Tibial artery (tissue), 4 donors: ENCODE measurements at regions of chr19 and their contacts with region 1.

Region 1: DNA sequence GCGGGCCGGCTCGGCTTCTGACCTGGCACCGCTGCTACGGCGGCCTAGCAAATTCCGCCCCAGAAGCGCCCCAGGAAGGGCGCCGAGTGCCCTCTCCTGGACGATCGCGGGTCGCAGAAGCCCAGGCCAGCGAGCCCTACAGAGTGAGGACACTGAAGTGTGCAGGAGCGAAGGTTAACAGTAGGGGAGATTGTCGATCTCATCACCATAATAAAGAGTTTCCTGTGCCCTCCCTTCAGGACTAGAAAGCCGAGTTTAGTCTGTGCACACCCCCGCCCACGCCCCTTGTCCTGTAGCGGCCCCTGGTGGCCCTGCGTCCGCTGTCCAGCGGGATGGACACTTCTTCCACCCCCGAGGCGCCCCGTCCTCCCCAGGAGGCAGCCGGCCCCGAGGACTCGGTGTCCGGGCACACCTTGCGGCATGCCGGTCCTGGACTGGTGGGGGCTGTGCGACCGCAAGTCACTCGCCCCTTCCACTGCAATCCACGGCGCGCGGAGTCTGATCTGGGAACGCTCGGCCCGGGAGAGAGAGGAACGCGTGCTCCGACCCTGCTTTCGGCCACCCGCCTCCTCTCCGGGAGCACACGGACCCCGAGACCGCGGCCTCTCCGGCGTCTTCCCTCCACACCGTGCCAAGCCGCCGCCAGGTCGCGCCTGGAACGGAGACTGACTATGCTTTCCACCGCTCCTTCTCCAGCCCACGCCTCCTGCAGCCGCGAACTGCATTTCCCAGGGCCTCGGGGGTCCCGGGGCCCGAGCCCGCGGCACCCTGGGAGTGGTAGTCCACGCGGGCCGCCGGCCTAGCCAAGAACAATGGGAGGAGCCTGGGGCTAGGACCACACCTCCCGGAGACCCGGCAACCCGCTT is 769 bp upstream of the KMT2B start:
- DNase-seq: peak; percentile 96 to 98
- H3K4me3 ChIP-seq: peak overlapping the region; percentile 64 to 95
- H3K27ac ChIP-seq: peak overlapping the region; percentile 86
- H3K4me1 ChIP-seq: peaks cover 0 to 36% (median 26%) of the 10 kb centered on the region in 4 donors
- H3K27me3 ChIP-seq: no peaks in the 10 kb centered on the region
- CTCF ChIP-seq: peak; percentile 87 to 93

Region 2: GRCh38 chr19:35124098-35125060 is 592.7 kb before region 1 on chr19:
- intact Hi-C with region 1: loop called (anchors 10 kb)
- DNase-seq: peak; percentile 96 to 97
- H3K4me3 ChIP-seq: peak overlapping the region; percentile 58 to 61
- H3K27ac ChIP-seq: peak overlapping the region; percentile 90 to 95
- H3K4me1 ChIP-seq: peaks cover 14 to 67% (median 33%) of the 10 kb centered on the region in 4 donors
- H3K27me3 ChIP-seq: no peaks in the 10 kb centered on the region
- CTCF ChIP-seq: peak in 1 of 2 experiments; percentile 5

Region 3: GRCh38 chr19:35545001-35545911 is 171.8 kb before region 1 on chr19 and contains the start of gene TMEM147:
- intact Hi-C with region 1: loop called (anchors 5 kb)
- DNase-seq: peak; percentile 92 to 96
- H3K4me3 ChIP-seq: peak within 1 kb of the TSS; percentile 79
- H3K27ac ChIP-seq: peak within 1 kb of the TSS; percentile 87 to 89
- H3K4me1 ChIP-seq: peaks cover 7 to 32% (median 20%) of the 10 kb centered on the region in 4 donors
- H3K27me3 ChIP-seq: no peaks in the 10 kb centered on the region
- CTCF ChIP-seq: no peak

Region 4: DNA sequence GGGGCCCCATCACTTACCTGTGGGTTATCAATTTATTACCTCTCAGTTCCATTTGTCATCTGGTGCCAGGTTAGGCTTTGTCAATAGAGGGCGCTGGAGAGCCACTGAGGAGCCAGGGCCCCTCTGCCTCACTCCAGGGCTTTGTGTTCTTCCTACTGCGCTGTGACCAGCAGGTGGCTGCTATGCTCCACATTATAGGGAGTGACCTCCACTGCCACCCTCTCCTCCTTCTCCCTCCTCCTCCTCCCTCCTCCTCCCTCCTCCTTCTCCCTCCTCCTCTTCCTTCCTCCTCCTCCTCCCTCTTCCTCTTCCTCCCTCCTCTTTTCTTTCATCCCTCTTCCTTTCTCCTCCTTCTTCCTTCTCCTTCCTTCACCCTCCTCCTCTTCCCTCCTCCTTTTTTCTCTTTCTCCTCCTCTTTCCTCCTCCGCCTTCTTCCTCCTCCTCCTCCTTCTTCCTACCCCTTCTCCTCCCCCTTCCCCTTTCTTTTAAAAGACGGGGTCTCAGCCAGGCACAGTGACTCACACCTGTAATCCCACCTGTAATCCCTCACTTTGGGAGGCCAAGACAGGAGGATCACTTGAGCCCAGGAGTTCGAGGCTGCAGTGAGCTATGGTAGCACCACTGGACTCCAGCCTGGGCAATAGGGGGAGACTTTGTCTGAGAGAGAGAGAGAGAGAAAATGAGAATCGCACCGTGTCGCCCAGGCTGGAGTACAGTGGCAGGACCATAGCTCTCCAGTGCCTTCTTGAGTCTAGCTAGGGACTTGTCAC is 23.0 kb before region 1 on chr19:
- intact Hi-C with region 1: loop called (anchors 2 kb)
- DNase-seq: peak; percentile 86 to 91
- H3K4me3 ChIP-seq: no peak overlapping the region
- H3K27ac ChIP-seq: no peak overlapping the region
- H3K4me1 ChIP-seq: peaks cover 0 to 5% (median 0%) of the 10 kb centered on the region in 4 donors
- H3K27me3 ChIP-seq: peaks cover 0 to 5% of the 10 kb centered on the region in 2 donors
- CTCF ChIP-seq: peak; percentile 95

Region 5: DNA sequence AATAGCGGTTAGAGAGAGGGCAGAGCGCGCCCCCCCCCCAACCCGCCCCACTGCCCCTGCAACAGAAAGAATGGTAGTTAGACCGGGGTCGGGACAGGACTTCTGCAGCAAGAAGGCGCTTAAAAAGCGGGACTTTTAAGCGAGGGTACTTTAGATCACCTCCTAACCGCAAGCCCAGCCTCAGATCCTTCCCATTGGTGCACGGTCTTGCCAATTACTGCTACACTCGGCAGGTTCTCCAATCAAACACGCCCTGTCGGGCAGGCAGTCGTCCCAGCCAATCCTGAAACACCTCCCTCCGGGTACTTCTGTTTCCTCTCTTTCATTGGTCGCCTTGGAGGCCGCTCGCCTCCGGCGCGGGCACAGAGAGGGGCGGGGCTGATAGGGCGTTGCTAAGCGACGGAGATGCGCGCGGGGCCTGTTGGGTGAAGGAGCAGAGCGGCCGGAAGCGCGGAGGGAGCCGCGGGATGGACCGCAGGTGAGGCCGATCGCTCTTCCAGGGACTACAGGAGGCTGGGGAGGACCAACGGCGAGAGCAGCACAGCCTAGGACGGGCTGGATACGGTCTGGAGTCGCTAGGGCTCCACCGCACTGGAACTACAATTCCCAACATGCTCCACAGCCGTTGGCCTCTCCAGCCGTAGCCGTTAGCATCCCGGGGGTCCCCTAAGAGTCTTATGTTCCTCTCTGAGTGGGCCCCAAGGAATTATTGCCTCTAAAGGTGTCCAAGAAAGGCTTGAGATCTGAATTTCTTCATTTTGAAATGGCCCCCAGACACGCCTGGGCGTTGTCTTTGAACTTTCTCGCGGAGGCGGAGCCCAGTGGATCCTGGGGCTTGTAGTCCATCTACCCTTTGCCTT is 40.9 kb after region 1 on chr19 and contains the start of gene PROSER3:
- intact Hi-C with region 1: loop called (anchors 5 kb)
- DNase-seq: peak; percentile 99 to 100
- H3K4me3 ChIP-seq: peak within 1 kb of the TSS; percentile 72 to 75
- H3K27ac ChIP-seq: peak within 1 kb of the TSS; percentile 93 to 100
- H3K4me1 ChIP-seq: peaks cover 5 to 57% (median 38%) of the 10 kb centered on the region in 4 donors
- H3K27me3 ChIP-seq: no peaks in the 10 kb centered on the region
- CTCF ChIP-seq: peak in 1 of 2 experiments; percentile 5

Region 6: DNA sequence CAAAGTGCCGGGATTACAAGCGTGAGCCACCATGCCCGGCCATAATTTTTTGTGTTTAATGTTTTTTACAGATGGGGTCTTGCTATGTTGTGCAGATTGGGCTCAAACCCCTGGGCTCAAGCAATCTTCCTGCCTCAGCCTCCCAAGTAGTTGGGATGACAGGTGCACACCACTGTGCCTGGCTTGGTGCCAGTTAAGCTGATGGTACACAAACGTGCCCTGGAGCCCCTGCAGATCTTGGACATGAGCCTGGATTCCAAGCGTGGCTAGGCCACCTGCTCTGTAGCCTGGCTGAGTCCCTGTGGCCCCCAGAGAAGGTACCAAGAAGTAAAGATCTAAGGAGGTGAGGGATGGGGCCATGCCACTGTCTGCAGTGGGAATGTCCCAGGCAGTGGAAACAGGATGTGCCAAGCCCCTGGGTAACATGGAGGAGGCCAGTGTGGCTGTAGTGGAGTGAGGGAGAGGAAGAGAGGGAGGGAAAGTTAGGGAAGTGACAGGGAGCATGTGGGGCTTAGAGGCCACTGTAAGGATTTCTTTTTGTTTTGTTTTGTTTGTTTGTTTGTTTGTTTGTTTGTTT is 88.6 kb after region 1 on chr19:
- intact Hi-C with region 1: no loop called
- DNase-seq: no peak
- H3K4me3 ChIP-seq: no peak overlapping the region
- H3K27ac ChIP-seq: no peak overlapping the region
- H3K4me1 ChIP-seq: no peaks in the 10 kb centered on the region
- H3K27me3 ChIP-seq: peaks cover 0 to 22% of the 10 kb centered on the region in 2 donors
- CTCF ChIP-seq: no peak